Mammary epithelial cell (primary cell): ENCODE measurements at regions of chr7 and their contacts with region 1.

Region 1: GRCh38 chr7:16982640-16983350 is 101.0 kb upstream of the AGR3 start:
- DNase-seq: peak; percentile 30
- H3K4me3 ChIP-seq: no peak overlapping the region
- H3K27ac ChIP-seq: no peak overlapping the region
- H3K4me1 ChIP-seq: peaks cover 19% of the 10 kb centered on the region
- H3K27me3 ChIP-seq: no peaks in the 10 kb centered on the region
- CTCF ChIP-seq: peak; percentile 95 to 96

Region 2: GRCh38 chr7:16891338-16891737 is 91.5 kb before region 1 on chr7:
- CTCF ChIA-PET with region 1: no interaction called
- dilution Hi-C with region 1: no loop called
- in situ Hi-C with region 1: no loop called
- intact Hi-C with region 1: loop called (anchors 1 kb)
- DNase-seq: peak; percentile 56
- H3K4me3 ChIP-seq: no peak overlapping the region
- H3K27ac ChIP-seq: no peak overlapping the region
- H3K4me1 ChIP-seq: peaks cover 7% of the 10 kb centered on the region
- H3K27me3 ChIP-seq: no peaks in the 10 kb centered on the region
- CTCF ChIP-seq: peak; percentile 72 to 76

Region 3: DNA sequence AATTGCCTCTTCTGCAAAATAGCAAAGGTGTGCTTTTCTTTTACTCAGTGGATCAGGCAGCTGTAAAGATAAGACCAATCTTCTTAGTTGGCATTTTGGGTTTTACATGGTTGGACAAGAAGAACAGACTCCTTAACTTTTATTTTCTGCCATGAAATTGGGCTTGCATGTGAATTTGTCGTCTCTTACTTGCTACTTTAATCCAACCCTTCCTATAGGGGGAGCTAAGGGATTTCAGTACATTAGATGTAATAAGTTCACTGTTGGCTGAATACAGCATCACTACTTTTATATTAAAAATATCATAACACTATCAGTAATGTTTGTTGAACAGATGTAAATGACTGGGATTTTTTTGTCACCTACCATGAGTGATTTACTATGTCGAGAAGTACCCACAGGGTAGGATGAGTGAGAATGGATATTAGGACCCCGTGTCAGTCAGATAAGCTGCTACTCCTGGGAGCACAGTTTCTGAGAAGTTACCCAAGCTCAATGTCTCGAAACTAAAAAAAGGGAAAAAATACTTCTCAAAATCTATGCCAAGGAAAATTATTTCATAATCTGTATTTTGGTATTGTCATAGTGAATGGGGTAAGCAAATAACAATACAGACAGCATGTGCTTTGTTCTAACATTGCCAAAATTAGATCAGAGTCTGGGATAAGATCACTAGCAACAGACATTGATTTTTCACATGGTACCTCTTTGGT is 26.4 kb after region 1 on chr7:
- CTCF ChIA-PET with region 1: no interaction called
- dilution Hi-C with region 1: no loop called
- in situ Hi-C with region 1: no loop called
- intact Hi-C with region 1: loop called (anchors 2 kb)
- DNase-seq: no peak
- H3K4me3 ChIP-seq: no peak overlapping the region
- H3K27ac ChIP-seq: no peak overlapping the region
- H3K4me1 ChIP-seq: peaks cover 17% of the 10 kb centered on the region
- H3K27me3 ChIP-seq: no peaks in the 10 kb centered on the region
- CTCF ChIP-seq: peak; percentile 44 to 60

Region 4: DNA sequence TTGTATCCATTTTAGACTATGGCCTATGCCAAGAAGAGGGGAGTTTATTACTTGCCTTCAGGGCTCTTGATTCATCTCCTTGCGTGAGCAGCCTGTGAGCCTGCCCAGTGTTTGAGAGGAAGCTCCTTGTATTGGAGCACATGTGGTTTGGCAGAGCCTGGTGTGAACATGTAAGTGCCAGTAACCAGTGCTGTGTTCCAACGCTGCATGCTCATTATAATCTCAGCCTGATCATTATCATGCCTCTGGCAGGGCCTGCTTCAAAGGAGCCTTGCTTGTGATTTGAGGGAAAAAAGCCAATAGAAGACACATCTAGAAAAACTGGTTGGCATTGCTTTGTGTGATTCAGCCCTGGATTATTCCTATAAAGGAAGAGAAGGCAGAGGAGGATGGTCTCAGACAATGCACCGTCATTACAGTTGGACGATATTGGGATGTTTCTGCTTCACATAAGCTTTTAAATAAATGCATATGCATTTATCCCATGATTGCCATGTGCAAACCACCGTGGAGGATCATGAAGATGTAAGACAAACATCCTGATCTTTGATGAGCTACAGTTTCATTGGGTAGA is 112.3 kb after region 1 on chr7:
- CTCF ChIA-PET with region 1: no interaction called
- dilution Hi-C with region 1: no loop called
- in situ Hi-C with region 1: no loop called
- intact Hi-C with region 1: loop called (anchors 10 kb)
- DNase-seq: peak; percentile 99
- H3K4me3 ChIP-seq: no peak overlapping the region
- H3K27ac ChIP-seq: peak overlapping the region; percentile 87
- H3K4me1 ChIP-seq: peaks cover 57% of the 10 kb centered on the region
- H3K27me3 ChIP-seq: no peaks in the 10 kb centered on the region
- CTCF ChIP-seq: no peak

Region 5: DNA sequence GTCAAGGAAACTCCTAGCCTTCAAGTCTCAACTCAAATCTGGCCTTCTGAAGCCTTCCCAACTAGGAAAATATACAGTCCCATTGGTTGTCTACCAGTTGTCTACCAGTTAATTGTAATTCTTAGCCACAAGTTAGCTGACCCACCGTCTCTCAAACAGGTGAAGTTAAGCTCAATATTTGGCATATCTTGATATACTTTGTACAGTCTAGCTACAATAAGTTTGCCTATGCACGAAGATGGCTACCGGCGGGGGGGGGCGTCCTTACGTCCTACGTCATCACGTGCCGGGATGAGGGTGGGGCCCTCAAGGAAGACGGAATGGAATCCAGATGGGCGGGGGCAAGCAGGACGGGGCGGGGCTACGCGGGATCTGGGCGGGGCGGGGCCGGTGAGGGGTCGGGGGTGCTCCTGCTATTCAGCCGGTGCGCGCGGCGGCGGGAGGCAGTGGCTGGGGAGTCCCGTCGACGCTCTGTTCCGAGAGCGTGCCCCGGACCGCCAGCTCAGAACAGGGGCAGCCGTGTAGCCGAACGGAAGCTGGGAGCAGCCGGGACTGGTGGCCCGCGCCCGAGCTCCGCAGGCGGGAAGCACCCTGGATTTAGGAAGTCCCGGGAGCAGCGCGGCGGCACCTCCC is 315.5 kb after region 1 on chr7 and contains the start of gene AHR:
- CTCF ChIA-PET with region 1: interaction called, 22 read pairs
- dilution Hi-C with region 1: no loop called
- in situ Hi-C with region 1: loop called (anchors 5 to 10 kb)
- intact Hi-C with region 1: loop called (anchors 1 kb)
- DNase-seq: peak; percentile 87
- H3K4me3 ChIP-seq: peak within 1 kb of the TSS; percentile 71 to 94 (median 93)
- H3K27ac ChIP-seq: peak within 1 kb of the TSS; percentile 90
- H3K4me1 ChIP-seq: peaks cover 12% of the 10 kb centered on the region
- H3K27me3 ChIP-seq: no peaks in the 10 kb centered on the region
- CTCF ChIP-seq: no peak
- total RNA-seq, gene AHR: 101 to 478 TPM

Region 6: DNA sequence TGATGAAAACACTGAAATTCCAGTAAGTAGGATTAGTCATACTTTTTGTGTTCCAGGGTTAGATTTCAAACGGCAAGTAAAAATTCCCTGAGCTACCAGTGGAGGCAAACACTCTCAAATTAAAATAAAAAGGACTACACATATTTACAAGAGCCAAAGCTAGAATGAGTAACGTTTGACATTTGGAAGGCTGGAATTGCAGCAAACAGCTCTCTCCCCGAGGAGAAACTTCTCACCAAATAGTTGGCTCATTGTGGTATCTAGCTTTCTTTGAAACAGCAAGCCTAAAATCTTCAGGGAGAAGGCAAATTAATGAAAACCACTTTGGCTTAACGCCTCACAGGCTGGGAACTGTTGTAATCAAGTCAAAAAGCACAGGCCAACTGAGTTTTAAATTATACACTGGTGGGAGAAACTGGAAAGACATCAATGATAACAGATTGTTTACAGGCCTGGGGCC is 669.2 kb after region 1 on chr7:
- CTCF ChIA-PET with region 1: no interaction called
- dilution Hi-C with region 1: no loop called
- in situ Hi-C with region 1: loop called in 1 of 2 experiments (anchors 25 kb)
- intact Hi-C with region 1: no loop called
- DNase-seq: peak; percentile 79
- H3K4me3 ChIP-seq: no peak overlapping the region
- H3K27ac ChIP-seq: peak overlapping the region; percentile 75
- H3K4me1 ChIP-seq: peaks cover 26% of the 10 kb centered on the region
- H3K27me3 ChIP-seq: no peaks in the 10 kb centered on the region
- CTCF ChIP-seq: peak; percentile 34 to 40